Gastrocnemius medialis (tissue), 4 donors: ENCODE measurements at regions of chr16 and their contacts with region 1.

Region 1: GRCh38 chr16:46883690-46884512 is at the start of gene GPT2:
- DNase-seq: peak; percentile 93 to 95
- ATAC-seq: peak; percentile 79 to 83
- H3K4me3 ChIP-seq: peak within 1 kb of the TSS; percentile 72 to 86 (median 80)
- H3K27ac ChIP-seq: peak within 1 kb of the TSS; percentile 82 to 92 (median 86)
- H3K4me1 ChIP-seq: peaks cover 16 to 35% of the 10 kb centered on the region in 2 donors
- H3K27me3 ChIP-seq: no peaks in the 10 kb centered on the region
- CTCF ChIP-seq: peak in 2 of 5 experiments; percentile 24 to 29
- POLR2A ChIP-seq: peak; percentile 81 to 83
- total RNA-seq, gene GPT2: 13.5 to 112 (median 55.7) TPM

Region 2: GRCh38 chr16:46830902-46831647 is 52.8 kb before region 1 on chr16 and contains the start of gene C16orf87:
- in situ Hi-C with region 1: no loop called
- intact Hi-C with region 1: loop called (anchors 1 kb)
- DNase-seq: peak; percentile 88 to 92
- ATAC-seq: peak; percentile 89 to 93
- H3K4me3 ChIP-seq: peak within 1 kb of the TSS; percentile 69 to 93 (median 86)
- H3K27ac ChIP-seq: peak within 1 kb of the TSS; percentile 90 to 98 (median 95)
- H3K4me1 ChIP-seq: peaks cover 10 to 16% of the 10 kb centered on the region in 2 donors
- H3K27me3 ChIP-seq: no peaks in the 10 kb centered on the region
- CTCF ChIP-seq: peak in 1 of 5 experiments; percentile 15
- POLR2A ChIP-seq: peak; percentile 77 to 79
- total RNA-seq, gene C16orf87: 13.5 to 22.4 (median 20.3) TPM

Region 3: DNA sequence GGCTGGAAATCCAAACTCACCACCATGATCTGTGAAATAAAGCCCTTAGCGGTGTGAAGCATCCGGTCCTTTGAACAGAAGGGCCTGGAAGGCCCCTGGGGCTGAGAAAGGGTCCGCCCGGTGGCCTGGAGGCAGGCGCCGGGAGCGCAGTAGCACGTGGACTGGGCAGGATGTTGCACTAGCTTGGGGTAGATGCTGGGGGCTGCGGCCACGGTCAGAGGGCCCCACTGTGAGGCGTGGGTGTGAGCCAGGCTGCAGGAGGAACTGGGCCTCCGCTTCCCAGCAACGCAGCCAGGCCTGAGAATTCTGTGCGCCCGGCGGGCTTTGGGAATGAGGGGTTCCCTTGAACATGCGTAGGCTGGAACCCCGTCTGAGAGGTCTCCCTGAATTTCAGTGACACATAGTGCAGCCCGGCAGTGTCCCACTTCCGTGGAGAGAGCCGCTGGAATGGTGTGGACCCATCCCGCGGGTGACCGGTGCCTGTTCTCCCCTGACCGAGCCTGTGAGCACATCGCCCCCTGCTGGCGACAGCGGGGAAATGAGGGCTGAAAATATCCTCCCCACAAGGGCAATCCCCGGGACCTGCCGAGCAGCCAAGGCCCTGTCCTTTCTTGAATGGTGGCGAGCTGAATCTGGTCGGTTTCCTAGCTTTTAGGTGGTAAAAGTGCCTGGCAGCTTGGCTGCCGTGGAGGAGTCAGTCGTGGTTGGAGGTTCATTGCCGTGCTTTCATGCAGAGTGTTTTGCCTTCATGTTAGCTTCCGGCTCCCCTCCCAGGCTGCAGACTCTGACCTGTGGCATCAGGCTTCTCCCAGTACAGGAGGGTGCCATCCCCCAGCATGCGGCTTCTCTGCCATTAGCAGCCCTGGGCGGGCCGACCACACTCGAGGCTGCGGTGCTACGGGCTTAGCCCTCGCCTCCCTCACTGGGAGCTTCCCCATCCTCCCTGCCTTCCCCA is 45.8 kb after region 1 on chr16:
- in situ Hi-C with region 1: no loop called
- intact Hi-C with region 1: no loop called
- DNase-seq: peak; percentile 34 to 68
- ATAC-seq: peak; percentile 34 to 74
- H3K4me3 ChIP-seq: no peak overlapping the region
- H3K27ac ChIP-seq: peak overlapping the region in 3 of 4 donors; percentile 7 to 58 (median 35)
- H3K4me1 ChIP-seq: peaks cover 10 to 22% of the 10 kb centered on the region in 2 donors
- H3K27me3 ChIP-seq: no peaks in the 10 kb centered on the region
- CTCF ChIP-seq: peak; percentile 61 to 88 (median 83)
- POLR2A ChIP-seq: no peak